ENCODE measurements at regions of chr1 and their contacts with region 1.

Region 1: GRCh38 chr1:58903514-58904298 is 119.9 kb upstream of the JUN start:
- DNase-seq: peak; percentile 98
- H3K4me3 ChIP-seq: peak overlapping the region; percentile 38 to 56 (median 53)
- H3K27ac ChIP-seq: peak overlapping the region; percentile 93 to 96 (median 96)
- H3K4me1 ChIP-seq: peaks cover 0 to 46% (median 26%) of the 10 kb centered on the region in 4 donors
- H3K27me3 ChIP-seq: no peaks in the 10 kb centered on the region
- CTCF ChIP-seq: no peak
- EP300 ChIP-seq: peak in 3 of 4 donors; percentile 42 to 84 (median 72)
- POLR2A ChIP-seq: peak; percentile 85 to 88

Region 2: DNA sequence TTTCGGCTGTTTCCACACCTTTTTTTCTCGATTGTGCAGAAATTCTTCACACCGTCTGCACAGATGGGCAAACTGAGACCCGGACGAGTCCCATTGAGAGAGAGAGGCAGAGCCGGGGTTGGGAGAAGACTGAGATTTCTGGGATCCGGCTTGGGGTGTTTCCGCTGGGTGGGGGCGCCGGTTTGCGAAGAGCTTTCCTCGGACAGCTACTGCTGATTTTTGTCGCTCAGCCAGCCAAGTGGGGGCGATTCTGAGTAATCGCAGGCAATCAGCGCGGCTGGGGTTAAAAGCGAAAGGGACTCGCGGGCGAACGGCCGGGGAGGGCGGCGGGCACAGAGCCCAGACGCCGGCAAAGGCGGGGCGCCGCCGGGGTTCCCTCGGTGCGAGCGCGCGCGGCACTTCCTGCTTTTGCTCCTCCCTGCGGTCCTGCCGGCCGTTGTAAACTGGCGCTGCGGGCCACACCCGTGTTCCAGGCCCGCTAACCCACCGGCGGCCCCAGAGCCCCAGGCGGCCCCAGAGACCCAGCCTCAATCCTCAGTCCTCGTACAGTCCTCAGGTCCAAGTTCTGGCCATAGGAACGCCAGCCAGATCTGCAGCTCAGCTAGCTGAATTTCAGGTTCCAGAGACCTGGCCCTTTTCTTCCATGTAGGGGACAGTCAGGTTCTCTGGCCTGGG is 87.5 kb before region 1 on chr1:
- intact Hi-C with region 1: loop called (anchors 1 kb)
- DNase-seq: peak; percentile 96
- H3K4me3 ChIP-seq: peak overlapping the region; percentile 42 to 66 (median 56)
- H3K27ac ChIP-seq: peak overlapping the region; percentile 84 to 94 (median 90)
- H3K4me1 ChIP-seq: peaks cover 0 to 24% (median 15%) of the 10 kb centered on the region in 4 donors
- H3K27me3 ChIP-seq: no peaks in the 10 kb centered on the region
- CTCF ChIP-seq: no peak
- EP300 ChIP-seq: no peak
- POLR2A ChIP-seq: peak; percentile 56 to 64

Region 3: DNA sequence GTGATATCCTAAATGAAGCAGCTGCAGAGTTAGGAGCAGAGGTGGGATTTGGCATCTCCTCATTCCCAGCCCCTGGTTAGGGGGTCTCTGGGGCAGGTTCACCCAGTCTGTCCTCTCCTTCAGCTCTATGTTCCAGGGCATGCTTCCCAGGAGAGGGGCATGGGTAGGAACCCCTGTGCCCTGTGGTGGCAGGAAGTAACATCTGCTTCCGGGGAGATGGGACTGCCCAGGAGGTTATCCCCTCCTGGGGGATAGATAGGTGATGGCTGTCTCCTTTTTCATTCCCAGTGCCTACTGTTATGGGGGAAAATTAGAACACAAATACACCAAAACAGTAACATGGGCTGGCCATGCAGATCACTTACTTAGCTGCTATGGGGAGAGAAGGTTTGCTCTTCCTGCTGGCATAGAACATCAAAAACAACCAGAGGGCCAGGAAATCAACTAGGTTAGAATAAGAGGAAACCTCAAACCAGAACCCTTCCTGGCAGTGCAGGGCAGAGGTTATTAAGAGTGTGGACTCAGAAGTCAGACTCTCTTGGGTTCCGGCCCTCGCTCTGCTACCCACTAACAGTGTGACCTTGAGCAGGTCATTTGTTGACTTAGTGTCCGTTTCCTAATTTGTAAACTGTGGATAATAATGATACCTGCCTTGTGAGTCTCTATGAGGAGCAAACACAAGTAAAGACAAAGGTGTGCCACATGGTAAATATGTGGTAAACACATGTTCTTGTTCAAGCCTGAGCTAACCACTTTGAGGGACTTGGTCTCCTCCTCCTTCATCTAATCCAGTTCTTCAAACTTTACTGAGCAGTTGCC is 38.0 kb after region 1 on chr1:
- intact Hi-C with region 1: no loop called
- DNase-seq: no peak
- H3K4me3 ChIP-seq: no peak overlapping the region
- H3K27ac ChIP-seq: peak overlapping the region in 1 of 4 donors; percentile 53
- H3K4me1 ChIP-seq: peaks cover 0 to 9% (median 4%) of the 10 kb centered on the region in 4 donors
- H3K27me3 ChIP-seq: no peaks in the 10 kb centered on the region
- CTCF ChIP-seq: no peak
- EP300 ChIP-seq: no peak
- POLR2A ChIP-seq: no peak

Region 4: GRCh38 chr1:59013276-59013927 is 109.7 kb after region 1 on chr1:
- intact Hi-C with region 1: loop called (anchors 2 kb)
- DNase-seq: peak; percentile 85
- H3K4me3 ChIP-seq: peak overlapping the region in 3 of 4 donors; percentile 2 to 26 (median 15)
- H3K27ac ChIP-seq: peak overlapping the region; percentile 72 to 95 (median 89)
- H3K4me1 ChIP-seq: peaks cover 0 to 49% (median 35%) of the 10 kb centered on the region in 4 donors
- H3K27me3 ChIP-seq: no peaks in the 10 kb centered on the region
- CTCF ChIP-seq: no peak
- EP300 ChIP-seq: peak in 3 of 4 donors; percentile 12 to 67 (median 30)
- POLR2A ChIP-seq: no peak

Region 5: DNA sequence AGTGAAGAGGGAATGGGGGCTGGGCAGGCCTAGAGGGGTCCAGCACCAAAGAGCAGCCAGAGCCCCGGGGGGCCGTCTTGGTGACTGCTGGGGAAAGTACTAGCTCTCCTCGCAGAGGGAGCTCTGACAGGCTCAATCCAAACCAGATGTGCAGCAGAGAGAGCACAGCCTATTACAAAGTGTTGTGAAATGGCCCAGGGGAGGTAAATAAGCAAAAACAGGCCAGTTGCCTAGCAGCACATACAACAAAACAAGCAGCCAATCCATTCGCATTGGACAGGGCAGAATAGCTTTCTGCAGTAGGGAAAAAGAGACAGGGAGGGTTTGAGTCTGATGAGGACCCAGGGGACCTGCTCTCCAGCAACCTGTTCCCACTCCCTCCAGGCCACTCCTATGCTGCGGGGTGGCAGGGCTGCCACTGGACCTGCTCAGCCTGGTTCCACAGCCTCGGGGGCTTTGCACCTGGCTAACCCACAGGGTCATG is 153.5 kb after region 1 on chr1:
- intact Hi-C with region 1: loop called (anchors 5 kb)
- DNase-seq: peak; percentile 92
- H3K4me3 ChIP-seq: no peak overlapping the region
- H3K27ac ChIP-seq: peak overlapping the region; percentile 43 to 68 (median 58)
- H3K4me1 ChIP-seq: peaks cover 0 to 51% (median 29%) of the 10 kb centered on the region in 4 donors
- H3K27me3 ChIP-seq: no peaks in the 10 kb centered on the region
- CTCF ChIP-seq: no peak
- EP300 ChIP-seq: peak in 3 of 4 donors; percentile 36 to 89 (median 61)
- POLR2A ChIP-seq: no peak

Region 6: DNA sequence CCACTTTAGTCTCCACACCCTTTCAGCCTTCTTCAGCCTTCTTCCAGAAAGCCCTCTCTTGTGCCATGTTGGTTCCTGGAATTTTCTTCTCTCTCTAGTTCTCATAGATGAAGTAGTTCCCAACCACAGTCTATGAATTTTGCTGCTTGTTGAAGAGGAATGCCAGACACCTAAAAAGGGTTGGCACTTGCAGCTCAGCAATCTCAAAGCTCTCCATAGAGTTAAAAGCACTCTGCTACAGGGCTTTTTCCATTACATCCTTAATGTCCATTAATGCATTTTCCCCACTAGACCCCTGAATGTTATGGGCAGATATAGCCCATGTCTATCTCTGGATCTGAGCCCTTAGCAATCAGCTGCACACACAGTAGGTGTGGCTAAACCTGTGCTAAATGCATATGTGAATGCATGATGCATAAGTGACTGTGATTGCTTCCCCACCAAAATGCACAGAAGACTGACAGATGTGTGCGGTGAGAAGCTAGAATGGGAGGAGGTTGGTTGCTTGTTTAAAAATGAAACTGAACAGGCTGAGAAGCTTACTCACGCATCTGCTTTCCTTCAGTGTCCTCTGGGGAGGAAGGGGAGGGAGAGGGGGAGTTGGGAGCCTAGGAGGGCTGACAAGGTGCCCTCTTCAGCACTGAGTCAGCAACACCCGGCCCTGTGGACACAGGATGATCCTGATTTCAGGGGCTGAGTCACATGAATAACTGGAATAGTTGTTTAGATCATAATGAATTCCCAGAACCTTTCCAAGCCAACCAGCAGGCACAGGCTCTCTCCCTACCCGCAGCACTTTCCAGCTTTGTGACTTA is 247.1 kb after region 1 on chr1:
- intact Hi-C with region 1: loop called (anchors 5 kb)
- DNase-seq: peak; percentile 96
- H3K4me3 ChIP-seq: peak overlapping the region in 2 of 4 donors; percentile 24 to 30
- H3K27ac ChIP-seq: peak overlapping the region; percentile 77 to 87 (median 82)
- H3K4me1 ChIP-seq: peaks cover 0 to 35% (median 29%) of the 10 kb centered on the region in 4 donors
- H3K27me3 ChIP-seq: no peaks in the 10 kb centered on the region
- CTCF ChIP-seq: no peak
- EP300 ChIP-seq: peak; percentile 23 to 87 (median 79)
- POLR2A ChIP-seq: no peak

Region 7: GRCh38 chr1:59699227-59699847 is 795.6 kb after region 1 on chr1:
- intact Hi-C with region 1: loop called (anchors 5 kb)
- DNase-seq: no peak
- H3K4me3 ChIP-seq: no peak overlapping the region
- H3K27ac ChIP-seq: peak overlapping the region in 3 of 4 donors; percentile 24 to 56 (median 51)
- H3K4me1 ChIP-seq: peaks cover 0 to 64% (median 44%) of the 10 kb centered on the region in 4 donors
- H3K27me3 ChIP-seq: no peaks in the 10 kb centered on the region
- CTCF ChIP-seq: peak; percentile 84 to 96 (median 96)
- EP300 ChIP-seq: no peak
- POLR2A ChIP-seq: no peak